Sigmoid colon (tissue), 7 donors: ENCODE measurements at regions of chr13 and their contacts with region 1.

Region 1: GRCh38 chr13:42969558-42970172 is 22.4 kb downstream of the EPSTI1 start:
- DNase-seq: peak; percentile 88
- H3K4me3 ChIP-seq: no peak overlapping the region
- H3K27ac ChIP-seq: no peak overlapping the region
- H3K4me1 ChIP-seq: peaks cover 0 to 16% (median 6%) of the 10 kb centered on the region in 4 donors
- H3K27me3 ChIP-seq: no peaks in the 10 kb centered on the region
- CTCF ChIP-seq: peak; percentile 59 to 80 (median 68)
- EP300 ChIP-seq: no peak
- POLR2A ChIP-seq: no peak

Region 2: DNA sequence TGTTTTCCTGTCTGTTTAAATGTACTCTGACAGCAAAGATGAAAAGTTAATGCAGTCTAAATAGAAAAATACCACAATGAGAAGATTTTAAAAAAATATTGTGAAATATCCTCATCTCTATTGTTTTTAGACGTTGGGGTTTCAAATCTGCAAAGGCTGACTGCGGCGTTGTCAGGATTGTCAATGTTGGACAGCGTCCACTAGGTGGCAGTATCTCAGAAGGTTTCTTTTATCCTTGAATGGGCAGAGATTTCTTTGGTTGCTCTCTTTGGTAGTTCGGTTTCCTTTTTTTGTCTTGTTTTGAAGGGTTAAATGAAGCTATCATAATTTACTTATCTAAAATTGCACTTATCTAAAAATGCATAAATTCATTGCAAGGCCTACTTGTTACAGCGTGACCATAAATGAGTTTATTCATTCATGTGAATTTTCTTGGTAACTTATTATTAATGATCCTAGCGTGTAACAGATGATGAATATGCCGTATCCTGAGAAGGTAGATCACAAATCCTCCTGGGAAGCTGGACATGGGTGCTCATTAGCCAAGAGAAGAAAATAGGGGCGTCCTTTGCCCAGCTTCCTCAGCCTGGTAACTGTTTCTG is 374.6 kb before region 1 on chr13:
- intact Hi-C with region 1: loop called (anchors 10 kb)
- DNase-seq: peak; percentile 79
- H3K4me3 ChIP-seq: no peak overlapping the region
- H3K27ac ChIP-seq: no peak overlapping the region
- H3K4me1 ChIP-seq: peaks cover 0 to 14% (median 3%) of the 10 kb centered on the region in 4 donors
- H3K27me3 ChIP-seq: no peaks in the 10 kb centered on the region
- CTCF ChIP-seq: peak; percentile 43 to 84 (median 69)
- EP300 ChIP-seq: no peak
- POLR2A ChIP-seq: no peak